Heart right ventricle (tissue), 16 donors: ENCODE measurements at regions of chr3 and their contacts with region 1.

Region 1: GRCh38 chr3:4584456-4585249 is 91.5 kb downstream of the ITPR1 start:
- DNase-seq: peak in 1 of 2 donors; percentile 39
- ATAC-seq: peak in 6 of 8 donors; percentile 29 to 60 (median 49)
- H3K4me3 ChIP-seq: peak overlapping the region in 8 of 10 donors; percentile 2 to 42 (median 38)
- H3K27ac ChIP-seq: peak overlapping the region in 9 of 10 donors; percentile 12 to 81 (median 71)
- H3K4me1 ChIP-seq: peaks cover 8 to 88% (median 79%) of the 10 kb centered on the region in 9 donors
- H3K27me3 ChIP-seq: no peaks in the 10 kb centered on the region
- CTCF ChIP-seq: peak in 7 of 9 donors; percentile 26 to 66 (median 42)

Region 2: DNA sequence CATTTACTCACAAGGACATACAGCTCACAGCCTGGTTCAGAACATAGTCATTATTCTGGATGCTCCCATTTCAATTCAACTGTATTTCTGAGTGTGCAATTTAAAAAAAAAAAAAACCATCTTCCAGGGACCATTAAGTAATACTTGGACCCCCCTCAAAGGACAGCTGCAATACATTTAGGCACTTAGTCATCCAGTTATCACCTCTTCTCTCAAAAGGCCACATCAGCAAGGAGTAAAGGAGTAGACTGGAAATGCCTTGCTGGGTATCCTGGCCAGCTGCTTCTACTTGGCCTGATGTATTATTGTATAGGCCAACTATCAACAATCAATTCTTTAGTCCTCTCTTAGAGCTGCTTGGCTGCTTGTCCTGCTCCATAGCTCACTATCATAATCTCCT is 492.9 kb before region 1 on chr3:
- intact Hi-C with region 1: no loop called
- DNase-seq: no peak
- ATAC-seq: no peak
- H3K4me3 ChIP-seq: no peak overlapping the region
- H3K27ac ChIP-seq: no peak overlapping the region
- H3K4me1 ChIP-seq: no peaks in the 10 kb centered on the region
- H3K27me3 ChIP-seq: no peaks in the 10 kb centered on the region
- CTCF ChIP-seq: no peak

Region 3: GRCh38 chr3:4153771-4154170 is 430.9 kb before region 1 on chr3:
- intact Hi-C with region 1: no loop called
- DNase-seq: no peak
- ATAC-seq: no peak
- H3K4me3 ChIP-seq: no peak overlapping the region
- H3K27ac ChIP-seq: no peak overlapping the region
- H3K4me1 ChIP-seq: no peaks in the 10 kb centered on the region
- H3K27me3 ChIP-seq: no peaks in the 10 kb centered on the region
- CTCF ChIP-seq: no peak

Region 4: DNA sequence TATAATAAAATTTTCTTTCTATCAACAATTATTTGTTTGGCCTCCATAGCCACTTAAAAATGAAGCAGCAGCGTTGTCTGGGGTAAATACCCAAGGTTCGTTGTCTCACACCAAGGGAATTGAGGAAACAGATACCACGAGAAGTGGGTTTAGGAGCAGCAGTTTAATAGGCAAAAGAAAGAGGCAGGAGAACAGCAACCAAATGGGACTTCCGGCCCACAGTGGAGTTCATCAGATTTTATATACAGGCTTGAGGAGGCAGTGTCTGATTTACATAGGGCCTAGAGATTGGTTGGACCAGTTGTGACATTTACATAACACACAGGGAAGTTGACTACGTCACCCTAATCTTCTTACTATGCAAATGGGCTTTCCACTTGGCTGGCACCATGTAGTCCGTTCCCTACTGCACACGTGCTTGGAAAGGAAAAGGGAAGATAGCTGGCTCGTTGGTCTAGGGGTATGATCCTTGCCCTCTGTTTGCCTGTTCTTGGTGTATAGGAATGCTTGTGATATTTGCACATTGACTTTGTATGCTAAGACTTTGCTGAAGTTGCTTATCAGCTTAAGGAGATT is 343.0 kb before region 1 on chr3:
- intact Hi-C with region 1: no loop called
- DNase-seq: no peak
- ATAC-seq: no peak
- H3K4me3 ChIP-seq: no peak overlapping the region
- H3K27ac ChIP-seq: no peak overlapping the region
- H3K4me1 ChIP-seq: no peaks in the 10 kb centered on the region
- H3K27me3 ChIP-seq: no peaks in the 10 kb centered on the region
- CTCF ChIP-seq: no peak

Region 5: DNA sequence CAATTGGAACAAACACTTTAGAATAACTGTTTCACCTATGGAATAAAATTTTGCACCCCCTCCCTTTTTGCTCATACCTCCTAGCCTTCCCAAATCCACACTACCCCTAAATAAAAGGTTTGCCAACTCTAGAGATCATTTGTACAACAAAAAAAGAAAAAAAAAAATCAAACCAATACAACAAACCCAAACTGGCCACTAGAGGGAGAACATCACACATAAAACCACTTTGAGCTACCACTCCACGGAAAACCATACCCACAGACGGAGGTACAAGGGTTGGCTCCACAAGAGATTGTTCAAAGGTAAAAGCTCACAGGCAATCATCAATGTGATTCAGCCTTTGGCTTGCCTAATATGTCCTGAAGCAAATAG is 233.9 kb before region 1 on chr3:
- intact Hi-C with region 1: loop called in 3 of 10 experiments (anchors 2 to 5 kb)
- DNase-seq: peak in 1 of 2 donors; percentile 66
- ATAC-seq: peak; percentile 71 to 92 (median 86)
- H3K4me3 ChIP-seq: peak overlapping the region in 9 of 10 donors; percentile 1 to 47 (median 43)
- H3K27ac ChIP-seq: peak overlapping the region in 8 of 10 donors; percentile 19 to 73 (median 54)
- H3K4me1 ChIP-seq: peaks cover 0 to 22% (median 9%) of the 10 kb centered on the region in 9 donors
- H3K27me3 ChIP-seq: no peaks in the 10 kb centered on the region
- CTCF ChIP-seq: peak; percentile 70 to 87 (median 77)

Region 6: GRCh38 chr3:4493014-4493940 is 91.4 kb before region 1 on chr3 and contains the start of gene ITPR1:
- intact Hi-C with region 1: loop called in 8 of 10 experiments (anchors 1 to 10 kb)
- DNase-seq: peak; percentile 98 to 99
- ATAC-seq: peak; percentile 97 to 100 (median 99)
- H3K4me3 ChIP-seq: peak within 1 kb of the TSS; percentile 68 to 93 (median 80)
- H3K27ac ChIP-seq: peak within 1 kb of the TSS; percentile 52 to 89 (median 87)
- H3K4me1 ChIP-seq: peaks cover 0 to 50% (median 44%) of the 10 kb centered on the region in 9 donors
- H3K27me3 ChIP-seq: no peaks in the 10 kb centered on the region
- CTCF ChIP-seq: peak in 1 of 9 donors; percentile 13
- total RNA-seq, gene ITPR1: 15.0 to 40.3 (median 19.1) TPM

Region 7: GRCh38 chr3:4504340-4505261 is 80.1 kb before region 1 on chr3:
- intact Hi-C with region 1: loop called in 4 of 10 experiments (anchors 5 to 10 kb)
- DNase-seq: no peak
- ATAC-seq: peak in 7 of 8 donors; percentile 11 to 70 (median 49)
- H3K4me3 ChIP-seq: peak overlapping the region in 7 of 10 donors; percentile 12 to 35 (median 26)
- H3K27ac ChIP-seq: peak overlapping the region in 9 of 10 donors; percentile 42 to 85 (median 51)
- H3K4me1 ChIP-seq: peaks cover 2 to 60% (median 27%) of the 10 kb centered on the region in 9 donors
- H3K27me3 ChIP-seq: no peaks in the 10 kb centered on the region
- CTCF ChIP-seq: no peak

Region 8: DNA sequence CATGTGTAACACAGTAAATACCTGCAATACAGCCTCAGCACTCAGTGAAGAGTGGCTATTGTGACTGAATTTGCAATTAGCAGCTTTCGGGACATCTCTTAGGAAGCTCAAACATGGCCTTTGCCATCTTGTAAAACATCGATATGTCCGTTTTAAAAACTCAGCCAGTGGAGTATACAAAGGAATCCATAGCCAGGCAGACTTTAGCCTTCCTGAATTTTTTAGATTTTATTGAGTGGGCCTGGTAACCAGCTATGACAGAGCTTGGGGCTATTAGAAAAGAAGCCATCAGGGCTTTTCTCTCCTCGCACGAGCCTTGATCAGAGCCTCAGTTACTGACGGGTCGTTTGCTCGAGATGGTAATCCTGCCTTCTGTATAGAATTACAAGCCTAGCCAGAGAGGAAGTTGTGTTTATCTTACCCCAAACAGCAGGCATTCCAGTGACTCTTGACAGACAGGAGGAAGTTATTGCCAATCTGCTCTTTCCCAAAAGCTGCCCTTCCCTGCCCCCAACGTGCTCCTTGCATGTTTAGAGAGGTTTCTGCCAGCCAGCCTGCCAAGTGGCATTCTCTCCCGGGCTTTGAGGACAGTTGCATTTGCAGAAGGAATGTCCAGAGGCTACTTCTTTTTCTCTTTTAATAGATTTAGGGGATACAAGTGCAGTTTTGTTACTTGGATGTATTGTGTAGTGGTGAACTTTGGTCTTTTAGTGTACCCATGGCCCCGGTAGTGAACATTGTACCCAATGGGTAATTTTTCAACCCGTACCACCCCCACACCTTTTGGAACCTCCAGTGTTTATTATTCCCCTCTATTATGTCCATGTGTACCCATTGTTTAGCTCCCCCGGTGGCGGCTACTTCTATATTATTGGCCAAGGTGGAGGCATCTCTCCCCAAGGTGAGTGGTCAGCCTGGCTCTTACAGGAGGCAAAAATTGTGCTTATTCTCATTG is 50.9 kb before region 1 on chr3:
- intact Hi-C with region 1: loop called in 1 of 10 experiments (anchors 5 kb)
- DNase-seq: peak; percentile 30 to 32
- ATAC-seq: peak in 5 of 8 donors; percentile 15 to 64 (median 39)
- H3K4me3 ChIP-seq: peak overlapping the region in 1 of 10 donors; percentile 0
- H3K27ac ChIP-seq: peak overlapping the region in 9 of 10 donors; percentile 5 to 64 (median 50)
- H3K4me1 ChIP-seq: peaks cover 0 to 71% (median 54%) of the 10 kb centered on the region in 9 donors
- H3K27me3 ChIP-seq: no peaks in the 10 kb centered on the region
- CTCF ChIP-seq: no peak

Region 9: GRCh38 chr3:4546346-4547178 is 38.1 kb before region 1 on chr3:
- intact Hi-C with region 1: loop called in 1 of 10 experiments (anchors 5 kb)
- DNase-seq: no peak
- ATAC-seq: peak in 1 of 8 donors; percentile 27
- H3K4me3 ChIP-seq: no peak overlapping the region
- H3K27ac ChIP-seq: no peak overlapping the region
- H3K4me1 ChIP-seq: peaks cover 0 to 41% (median 27%) of the 10 kb centered on the region in 9 donors
- H3K27me3 ChIP-seq: no peaks in the 10 kb centered on the region
- CTCF ChIP-seq: no peak

Region 10: GRCh38 chr3:4601892-4602291 is 17.2 kb after region 1 on chr3:
- intact Hi-C with region 1: loop called in 1 of 10 experiments (anchors 2 kb)
- DNase-seq: no peak
- ATAC-seq: no peak
- H3K4me3 ChIP-seq: no peak overlapping the region
- H3K27ac ChIP-seq: no peak overlapping the region
- H3K4me1 ChIP-seq: peaks cover 0 to 41% (median 23%) of the 10 kb centered on the region in 9 donors
- H3K27me3 ChIP-seq: no peaks in the 10 kb centered on the region
- CTCF ChIP-seq: no peak

Region 11: GRCh38 chr3:4826237-4827100 is 241.8 kb after region 1 on chr3:
- intact Hi-C with region 1: no loop called
- DNase-seq: peak; percentile 85 to 87
- ATAC-seq: peak; percentile 85 to 96 (median 90)
- H3K4me3 ChIP-seq: peak overlapping the region in 4 of 10 donors; percentile 5 to 16 (median 10)
- H3K27ac ChIP-seq: peak overlapping the region; percentile 21 to 92 (median 85)
- H3K4me1 ChIP-seq: peaks cover 16 to 84% (median 44%) of the 10 kb centered on the region in 9 donors
- H3K27me3 ChIP-seq: no peaks in the 10 kb centered on the region
- CTCF ChIP-seq: no peak